Activated CD4-positive, alpha-beta T cell treated with anti-CD3 and anti-CD28 coated beads for 36 hours (primary cell): ENCODE measurements at regions of chr9 and their contacts with region 1.

Region 1: DNA sequence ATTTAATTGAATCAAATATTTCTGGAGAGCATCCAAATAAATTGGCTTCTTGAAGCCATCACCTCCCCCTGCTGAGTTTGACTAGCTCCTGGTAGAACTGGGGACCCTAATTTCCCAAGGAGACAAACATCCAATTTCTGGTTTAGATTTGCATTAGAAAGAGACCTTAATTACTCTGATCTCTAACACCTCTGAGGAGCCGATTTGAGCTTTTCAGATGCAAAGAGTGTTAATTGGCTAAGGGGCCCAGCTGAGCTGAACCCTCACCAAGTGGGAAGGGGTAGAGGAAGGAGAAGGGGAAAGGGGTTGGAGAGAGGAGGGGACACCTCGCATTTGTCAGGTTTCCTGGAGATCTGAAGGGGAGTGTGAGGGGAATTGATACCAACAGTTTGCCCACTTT is 145.4 kb upstream of the SHB start:
- DNase-seq: no peak
- ATAC-seq: no peak
- H3K4me3 Mint-ChIP-seq: no peak overlapping the region
- H3K27ac Mint-ChIP-seq: no peak overlapping the region
- H3K4me1 Mint-ChIP-seq: no peaks in the 10 kb centered on the region
- H3K27me3 Mint-ChIP-seq: peaks cover 7% of the 10 kb centered on the region

Region 2: DNA sequence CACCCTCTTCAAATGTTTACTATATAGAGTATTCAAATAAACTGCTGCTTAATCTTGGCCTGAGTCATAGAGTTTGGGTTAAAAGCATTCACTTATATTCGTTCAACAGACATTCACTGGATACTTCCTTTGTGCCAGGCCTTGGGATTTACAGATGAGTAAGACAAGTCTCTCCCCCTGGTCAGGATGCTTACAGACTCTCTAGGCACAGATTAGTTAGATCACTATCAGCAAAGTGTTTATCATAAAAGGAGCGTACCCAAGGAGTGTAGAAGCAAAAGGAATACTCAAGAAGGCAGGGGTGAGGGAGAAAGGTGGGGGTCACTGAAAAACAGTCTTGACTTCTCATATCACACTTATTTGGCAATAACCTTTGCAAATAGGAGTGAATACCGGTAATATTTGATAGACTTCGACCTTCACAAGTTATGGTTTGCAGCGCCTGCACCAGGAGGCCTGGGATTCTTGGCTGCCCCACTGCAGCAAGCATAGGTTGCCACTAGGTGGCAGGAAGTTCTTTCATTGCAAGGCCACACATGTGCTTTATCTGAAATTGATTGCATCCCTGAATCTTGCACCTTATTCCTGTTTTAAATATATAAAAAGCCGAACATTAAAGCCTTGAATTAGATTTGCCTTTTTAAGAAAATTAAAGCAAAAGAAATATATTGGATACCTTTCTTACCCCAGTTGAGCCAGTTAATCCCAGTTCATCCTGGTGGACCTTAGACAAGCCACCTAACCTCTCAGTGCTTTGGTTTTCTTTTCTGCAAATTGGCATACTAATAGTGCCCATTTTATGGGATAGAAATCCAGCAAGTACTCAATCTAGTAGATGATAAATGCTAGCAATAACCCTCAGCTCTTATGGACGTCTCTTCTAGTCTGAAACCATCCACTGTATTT is 467.3 kb before region 1 on chr9:
- CTCF ChIA-PET with region 1: no interaction called
- POLR2A ChIA-PET with region 1: no interaction called
- intact Hi-C with region 1: no loop called
- DNase-seq: peak; percentile 78
- ATAC-seq: peak; percentile 98
- H3K4me3 Mint-ChIP-seq: no peak overlapping the region
- H3K27ac Mint-ChIP-seq: no peak overlapping the region
- H3K4me1 Mint-ChIP-seq: no peaks in the 10 kb centered on the region
- H3K27me3 Mint-ChIP-seq: no peaks in the 10 kb centered on the region

Region 3: GRCh38 chr9:38233343-38233742 is 18.9 kb after region 1 on chr9:
- CTCF ChIA-PET with region 1: no interaction called
- POLR2A ChIA-PET with region 1: no interaction called
- intact Hi-C with region 1: no loop called
- DNase-seq: no peak
- ATAC-seq: no peak
- H3K4me3 Mint-ChIP-seq: no peak overlapping the region
- H3K27ac Mint-ChIP-seq: no peak overlapping the region
- H3K4me1 Mint-ChIP-seq: no peaks in the 10 kb centered on the region
- H3K27me3 Mint-ChIP-seq: no peaks in the 10 kb centered on the region

Region 4: GRCh38 chr9:38251036-38251860 is 36.8 kb after region 1 on chr9:
- CTCF ChIA-PET with region 1: no interaction called
- POLR2A ChIA-PET with region 1: no interaction called
- intact Hi-C with region 1: loop called in 1 of 2 experiments (anchors 5 kb)
- DNase-seq: no peak
- ATAC-seq: no peak
- H3K4me3 Mint-ChIP-seq: no peak overlapping the region
- H3K27ac Mint-ChIP-seq: no peak overlapping the region
- H3K4me1 Mint-ChIP-seq: no peaks in the 10 kb centered on the region
- H3K27me3 Mint-ChIP-seq: peaks cover 1% of the 10 kb centered on the region